ENCODE measurements at regions of chr2 and their contacts with region 1.

Region 1: DNA sequence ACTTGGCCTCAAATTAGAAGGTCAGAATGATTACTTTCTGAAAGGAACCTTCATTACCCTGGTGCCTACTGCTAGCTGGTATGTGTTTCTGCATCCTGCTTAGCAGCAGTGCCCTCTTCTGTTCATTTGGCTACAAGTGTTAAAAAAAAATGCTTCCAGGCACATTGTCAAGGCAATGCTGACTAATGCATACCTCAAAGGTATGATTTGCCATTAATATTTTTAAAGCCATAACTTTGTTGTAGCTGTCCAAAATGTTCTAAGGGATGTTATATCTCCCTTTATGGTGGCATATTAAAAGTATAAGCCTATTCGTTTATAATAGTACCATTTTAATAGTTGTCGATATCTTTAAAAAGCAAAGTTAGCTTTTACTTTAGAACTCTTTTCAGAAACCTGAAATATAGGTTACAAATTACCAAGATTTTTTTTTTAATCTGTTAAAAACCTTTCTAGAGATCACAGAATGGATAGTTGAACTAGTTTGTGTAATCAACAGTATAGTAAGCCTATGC is 52.0 kb upstream of the FAM171B start:
- DNase-seq: peak; percentile 75

Region 2: DNA sequence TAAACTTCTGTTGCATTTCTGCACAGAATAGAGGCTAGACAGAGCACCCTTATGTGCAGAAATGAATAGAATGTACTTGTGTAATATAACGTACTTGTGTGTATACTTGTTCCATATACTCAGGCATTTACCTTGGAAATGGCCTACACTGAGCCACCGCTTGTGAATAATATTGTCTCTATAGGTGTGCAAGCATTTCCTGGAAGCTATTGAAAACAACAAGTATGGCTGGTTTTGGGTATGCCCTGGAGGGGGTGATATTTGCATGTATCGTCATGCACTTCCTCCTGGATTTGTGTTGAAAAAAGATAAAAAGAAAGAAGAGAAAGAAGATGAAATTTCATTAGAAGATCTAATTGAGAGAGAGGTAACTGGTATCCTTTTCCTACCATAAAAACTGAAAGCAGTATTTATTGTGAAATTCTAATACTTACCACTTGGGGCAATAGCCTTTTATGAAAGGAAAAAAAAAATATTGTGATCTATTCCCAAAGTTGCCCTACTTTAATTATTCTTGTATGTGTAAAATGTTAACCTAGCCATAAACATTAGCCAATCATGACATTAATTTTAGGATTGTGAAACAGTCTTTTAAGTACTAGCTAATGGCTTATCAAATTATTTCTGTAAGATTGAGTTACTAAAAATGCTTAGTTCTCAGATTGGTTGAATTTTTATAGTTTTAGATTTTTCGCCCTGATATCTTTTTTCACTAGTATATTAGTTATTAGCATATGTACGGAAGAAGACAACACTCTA is 137.8 kb before region 1 on chr2:
- in situ Hi-C with region 1: loop called (anchors 25 kb)
- DNase-seq: peak; percentile 73